ENCODE measurements at regions of chr17 and their contacts with region 1.

Region 1: DNA sequence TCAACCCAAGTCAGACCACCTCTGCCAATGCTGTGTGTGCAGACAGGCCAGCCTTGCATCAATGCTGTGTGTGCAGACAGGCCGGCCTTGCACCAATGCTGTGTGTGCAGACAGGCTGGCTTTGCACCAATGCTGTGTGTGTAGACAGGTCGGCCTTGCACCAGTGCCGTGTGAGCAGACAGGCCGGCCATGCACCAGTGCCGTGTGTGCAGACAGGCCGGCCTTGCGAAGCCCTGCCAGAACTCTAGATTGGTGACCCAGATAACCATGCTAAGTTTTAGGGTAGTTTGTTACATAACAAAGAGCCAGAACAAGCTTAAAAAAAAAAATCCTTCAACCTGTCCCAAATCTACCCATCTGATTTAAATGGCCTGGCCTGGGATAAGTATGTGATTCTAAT is 54.3 kb downstream of the ELAC2 start:
- DNase-seq: no peak
- H3K4me3 ChIP-seq: no peak overlapping the region
- H3K27ac ChIP-seq: no peak overlapping the region
- H3K4me1 ChIP-seq: no peaks in the 10 kb centered on the region
- H3K27me3 ChIP-seq: no peaks in the 10 kb centered on the region
- CTCF ChIP-seq: no peak
- POLR2A ChIP-seq: no peak

Region 2: GRCh38 chr17:12896145-12896786 is 67.2 kb before region 1 on chr17:
- intact Hi-C with region 1: loop called (anchors 10 kb)
- DNase-seq: no peak
- H3K4me3 ChIP-seq: no peak overlapping the region
- H3K27ac ChIP-seq: no peak overlapping the region
- H3K4me1 ChIP-seq: peaks cover 5% of the 10 kb centered on the region
- H3K27me3 ChIP-seq: no peaks in the 10 kb centered on the region
- CTCF ChIP-seq: no peak
- POLR2A ChIP-seq: no peak

Region 3: GRCh38 chr17:13129356-13129755 is 165.9 kb after region 1 on chr17:
- intact Hi-C with region 1: no loop called
- DNase-seq: no peak
- H3K4me3 ChIP-seq: no peak overlapping the region
- H3K27ac ChIP-seq: no peak overlapping the region
- H3K4me1 ChIP-seq: no peaks in the 10 kb centered on the region
- H3K27me3 ChIP-seq: no peaks in the 10 kb centered on the region
- CTCF ChIP-seq: no peak
- POLR2A ChIP-seq: no peak